Naive thymus-derived CD4-positive, alpha-beta T cell (primary cell): ENCODE measurements at regions of chr17 and their contacts with region 1.

Region 1: DNA sequence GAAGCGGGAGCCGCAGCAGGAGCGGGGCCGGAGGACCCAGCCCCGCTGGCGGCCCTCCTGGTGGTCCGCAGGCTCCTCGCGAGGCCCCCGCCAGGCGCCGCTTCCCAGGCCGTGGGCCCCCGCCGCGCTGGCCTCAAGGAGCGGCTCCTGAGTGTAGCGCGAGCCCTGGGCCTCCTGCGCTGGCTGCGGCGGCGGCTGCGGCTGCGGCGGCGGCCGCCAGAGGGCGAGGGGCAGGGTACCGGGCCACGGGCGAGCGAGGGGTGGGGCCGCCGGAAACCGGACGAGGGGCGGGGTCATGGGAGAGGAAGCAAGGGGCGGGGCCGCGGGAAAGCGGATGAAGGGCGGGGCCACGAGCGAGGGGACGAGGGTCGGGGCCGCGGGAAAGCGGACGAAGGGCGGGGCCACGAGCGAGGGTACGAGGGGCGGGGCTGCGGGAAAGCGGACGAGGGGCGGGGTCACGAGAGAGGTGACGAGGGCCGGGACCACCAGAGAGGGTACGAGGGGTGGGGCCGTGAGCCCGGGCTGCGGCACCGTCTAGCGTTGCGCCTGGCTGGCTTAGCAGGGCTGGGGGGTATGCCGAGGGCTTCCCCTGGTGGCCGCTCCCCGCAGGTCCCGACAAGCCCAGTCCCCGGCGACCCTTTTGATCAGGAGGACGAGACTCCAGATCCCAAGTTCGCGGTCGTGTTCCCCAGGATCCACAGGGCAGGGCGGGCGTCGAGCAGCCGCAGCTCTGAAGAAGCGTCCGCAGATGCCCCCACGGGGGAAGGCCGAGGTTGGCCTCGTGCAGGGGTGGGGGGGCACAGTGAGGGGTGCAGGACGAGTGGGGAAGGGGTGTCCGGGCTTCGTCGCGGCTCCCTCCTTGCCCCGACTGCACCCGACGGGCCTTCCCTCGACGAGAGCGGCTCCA is 1.7 kb downstream of the MYO15B start:
- DNase-seq: peak; percentile 81 to 98 (median 93)
- ATAC-seq: peak; percentile 94
- H3K4me3 ChIP-seq: peak overlapping the region; percentile 53
- H3K4me3 Mint-ChIP-seq: peak overlapping the region; percentile 57 to 95 (median 82)
- H3K27ac ChIP-seq: peak overlapping the region; percentile 83
- H3K27ac Mint-ChIP-seq: peak overlapping the region in 6 of 9 donors; percentile 59 to 95 (median 86)
- H3K4me1 ChIP-seq: peaks cover 0 to 2% of the 10 kb centered on the region in 2 donors
- H3K4me1 Mint-ChIP-seq: peaks cover 0 to 17% (median 11%) of the 10 kb centered on the region in 7 donors
- H3K27me3 ChIP-seq: no peaks in the 10 kb centered on the region
- H3K27me3 Mint-ChIP-seq: peaks cover 0 to 31% (median 0%) of the 10 kb centered on the region in 5 donors

Region 2: DNA sequence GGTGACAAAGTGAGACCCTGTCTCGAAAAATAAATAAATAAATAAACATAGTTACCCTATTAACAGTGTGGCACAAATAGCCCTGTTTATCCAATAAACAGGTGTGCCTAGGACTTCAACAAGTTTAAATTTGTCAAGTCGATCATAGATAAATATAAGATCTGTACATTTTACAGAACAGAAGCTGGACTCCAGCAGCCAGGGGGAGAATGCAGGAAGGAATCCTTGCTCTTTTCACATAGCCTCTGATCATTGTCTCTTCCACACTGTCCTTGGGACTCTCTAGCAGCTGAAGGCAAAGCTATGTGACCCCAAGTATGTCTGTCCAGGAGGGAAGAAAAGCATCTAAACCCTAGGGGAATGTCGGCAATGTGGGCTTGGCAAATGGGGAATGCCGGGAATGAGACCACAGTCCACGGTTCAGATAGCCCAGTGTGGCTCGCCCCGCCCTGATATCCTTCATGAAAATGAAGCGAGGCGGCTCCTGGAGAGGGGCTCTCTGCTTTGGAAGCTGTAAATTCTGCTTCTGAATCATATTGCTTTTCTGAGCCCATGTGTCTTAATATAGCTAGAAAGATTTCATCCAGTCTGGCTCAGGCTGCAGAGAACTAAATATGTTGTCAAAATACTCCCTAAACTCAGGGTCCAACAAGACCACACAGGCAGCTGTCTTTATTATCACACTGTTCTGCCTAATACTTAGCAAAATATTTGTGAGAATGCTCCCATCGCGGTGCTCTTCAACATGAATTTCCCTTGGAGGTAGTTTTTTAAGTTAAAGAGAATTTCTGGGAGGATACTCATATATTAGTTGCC is 158.9 kb before region 1 on chr17:
- CTCF ChIA-PET with region 1: interaction called, 4 read pairs
- POLR2A ChIA-PET with region 1: no interaction called
- intact Hi-C with region 1: loop called (anchors 1 kb)
- DNase-seq: no peak
- ATAC-seq: no peak
- H3K4me3 ChIP-seq: no peak overlapping the region
- H3K4me3 Mint-ChIP-seq: no peak overlapping the region
- H3K27ac ChIP-seq: no peak overlapping the region
- H3K27ac Mint-ChIP-seq: no peak overlapping the region
- H3K4me1 ChIP-seq: peaks cover 0 to 6% of the 10 kb centered on the region in 2 donors
- H3K4me1 Mint-ChIP-seq: peaks cover 6 to 17% (median 9%) of the 10 kb centered on the region in 7 donors
- H3K27me3 ChIP-seq: no peaks in the 10 kb centered on the region
- H3K27me3 Mint-ChIP-seq: peaks cover 0 to 38% (median 4%) of the 10 kb centered on the region in 5 donors

Region 3: DNA sequence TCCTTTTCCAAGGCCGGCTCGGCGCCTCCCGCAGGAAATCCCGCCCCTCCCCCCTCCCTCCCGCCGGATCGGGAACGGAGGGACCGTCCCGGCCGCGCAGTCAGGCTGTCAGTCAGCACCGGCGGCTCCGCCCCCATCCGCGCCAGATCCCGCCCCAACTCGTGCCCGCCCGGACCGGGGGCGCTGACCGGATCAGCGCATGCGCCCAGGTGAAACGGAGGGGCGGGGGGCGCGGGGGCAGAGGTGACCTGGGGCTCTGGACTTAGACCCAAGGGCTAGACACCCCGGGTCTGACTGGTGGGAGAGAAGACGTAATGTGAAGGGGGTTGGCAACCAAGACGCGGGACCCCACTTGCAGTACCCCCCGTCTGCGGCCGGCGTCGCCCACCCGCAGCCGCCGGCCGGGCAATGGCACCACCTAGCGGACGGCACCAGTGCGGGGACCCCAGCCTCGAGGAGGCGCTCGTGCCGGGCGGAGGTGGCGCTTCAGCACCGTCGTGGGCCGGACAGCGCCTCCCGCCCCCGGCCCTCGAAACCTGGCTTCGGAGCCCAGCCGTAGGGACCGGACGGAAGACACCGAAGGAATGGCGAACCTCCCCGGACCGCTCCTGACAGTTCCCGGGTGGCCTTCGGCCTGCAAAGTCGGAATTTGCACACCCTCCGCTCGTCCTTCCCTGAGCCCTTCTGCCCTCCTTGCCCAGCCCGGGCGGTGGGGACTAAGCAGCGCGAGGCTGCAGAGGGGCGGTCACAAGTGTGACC is 73.6 kb before region 1 on chr17 and contains the start of gene CASKIN2:
- CTCF ChIA-PET with region 1: interaction called, 3 read pairs
- POLR2A ChIA-PET with region 1: interaction called, 15 read pairs
- intact Hi-C with region 1: loop called (anchors 1 kb)
- DNase-seq: peak; percentile 57 to 88 (median 70)
- ATAC-seq: peak; percentile 80
- H3K4me3 ChIP-seq: peak within 1 kb of the TSS; percentile 97
- H3K4me3 Mint-ChIP-seq: peak within 1 kb of the TSS; percentile 69 to 85 (median 78)
- H3K27ac ChIP-seq: no peak within 1 kb of the TSS
- H3K27ac Mint-ChIP-seq: peak within 1 kb of the TSS in 4 of 9 donors; percentile 36 to 63 (median 47)
- H3K4me1 ChIP-seq: peaks cover 23 to 25% of the 10 kb centered on the region in 2 donors
- H3K4me1 Mint-ChIP-seq: peaks cover 18 to 28% (median 22%) of the 10 kb centered on the region in 7 donors
- H3K27me3 ChIP-seq: no peaks in the 10 kb centered on the region
- H3K27me3 Mint-ChIP-seq: peaks cover 0 to 14% (median 0%) of the 10 kb centered on the region in 5 donors
- total RNA-seq, gene CASKIN2: 0.22 to 1.2 (median 0.92) TPM

Region 4: GRCh38 chr17:75576661-75577060 is 12.6 kb before region 1 on chr17:
- CTCF ChIA-PET with region 1: interaction called, 3 read pairs
- POLR2A ChIA-PET with region 1: interaction called, 3 read pairs
- intact Hi-C with region 1: loop called in 1 of 2 experiments (anchors 1 kb)
- DNase-seq: no peak
- ATAC-seq: no peak
- H3K4me3 ChIP-seq: no peak overlapping the region
- H3K4me3 Mint-ChIP-seq: no peak overlapping the region
- H3K27ac ChIP-seq: no peak overlapping the region
- H3K27ac Mint-ChIP-seq: no peak overlapping the region
- H3K4me1 ChIP-seq: no peaks in the 10 kb centered on the region
- H3K4me1 Mint-ChIP-seq: peaks cover 6 to 10% (median 8%) of the 10 kb centered on the region in 7 donors
- H3K27me3 ChIP-seq: no peaks in the 10 kb centered on the region
- H3K27me3 Mint-ChIP-seq: peaks cover 0 to 11% (median 0%) of the 10 kb centered on the region in 5 donors

Region 5: DNA sequence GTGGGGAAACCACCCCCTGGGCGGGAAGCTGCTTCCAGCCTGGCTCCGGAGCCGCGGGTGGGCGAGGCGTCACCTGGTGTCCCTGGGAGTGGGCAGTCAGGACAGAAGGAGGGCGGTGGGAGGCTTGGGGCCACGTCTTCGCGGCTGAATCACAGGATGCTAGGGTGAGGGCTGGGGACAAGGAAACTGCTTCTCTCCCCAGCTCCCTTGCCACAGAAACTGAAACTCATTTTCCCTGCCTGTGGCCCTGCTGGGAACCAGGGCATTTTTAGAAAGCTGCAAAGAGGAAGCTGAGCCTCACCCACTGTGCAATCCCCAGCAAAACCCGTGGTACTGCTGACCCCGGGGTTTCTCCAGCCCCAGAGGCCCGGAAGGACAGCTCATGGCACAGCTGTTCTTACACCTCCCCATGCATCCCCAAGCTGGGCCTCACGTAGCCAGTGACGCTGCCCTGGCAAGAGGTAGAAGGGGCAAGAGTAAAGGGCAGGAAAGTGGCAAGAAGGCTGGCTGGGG is 903.8 kb after region 1 on chr17:
- CTCF ChIA-PET with region 1: no interaction called
- POLR2A ChIA-PET with region 1: no interaction called
- intact Hi-C with region 1: loop called in 1 of 2 experiments (anchors 5 kb)
- DNase-seq: peak in 2 of 9 donors; percentile 22 to 70
- ATAC-seq: peak; percentile 84
- H3K4me3 ChIP-seq: peak overlapping the region; percentile 65
- H3K4me3 Mint-ChIP-seq: peak overlapping the region; percentile 72 to 92 (median 82)
- H3K27ac ChIP-seq: peak overlapping the region; percentile 0
- H3K27ac Mint-ChIP-seq: peak overlapping the region; percentile 44 to 99 (median 76)
- H3K4me1 ChIP-seq: peaks cover 32 to 47% of the 10 kb centered on the region in 2 donors
- H3K4me1 Mint-ChIP-seq: peaks cover 12 to 76% (median 32%) of the 10 kb centered on the region in 7 donors
- H3K27me3 ChIP-seq: no peaks in the 10 kb centered on the region
- H3K27me3 Mint-ChIP-seq: no peaks in the 10 kb centered on the region